ENCODE measurements at regions of chrX and their contacts with region 1.

Region 1: DNA sequence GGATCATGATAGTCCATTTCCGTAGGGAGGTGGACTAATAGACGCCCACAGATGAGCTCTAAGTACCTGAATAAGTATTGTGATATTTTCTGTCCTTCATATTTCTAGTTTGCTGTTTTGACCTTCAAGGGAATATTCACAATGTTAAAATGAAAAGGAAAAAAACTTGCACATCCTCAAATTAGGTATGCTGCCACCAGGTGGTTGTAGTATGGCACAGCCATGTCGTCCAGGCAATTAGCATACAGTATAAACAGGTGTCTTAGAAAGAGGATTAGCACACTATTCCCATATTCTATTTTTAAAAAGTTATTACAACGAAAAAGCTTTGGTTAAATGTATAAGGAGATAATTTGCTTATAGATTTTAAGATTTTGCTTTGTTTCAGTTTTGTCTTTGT is 802.0 kb downstream of the RPA4 start:
- DNase-seq: peak; percentile 45
- H3K4me3 Mint-ChIP-seq: no peak overlapping the region
- H3K27ac Mint-ChIP-seq: no peak overlapping the region
- H3K4me1 Mint-ChIP-seq: no peaks in the 10 kb centered on the region
- H3K27me3 Mint-ChIP-seq: no peaks in the 10 kb centered on the region
- CTCF ChIP-seq: no peak

Region 2: GRCh38 chrX:97026406-97026805 is 659.3 kb before region 1 on chrX:
- CTCF ChIA-PET with region 1: no interaction called
- intact Hi-C with region 1: loop called (anchors 2 kb)
- DNase-seq: no peak
- H3K4me3 Mint-ChIP-seq: no peak overlapping the region
- H3K27ac Mint-ChIP-seq: no peak overlapping the region
- H3K4me1 Mint-ChIP-seq: no peaks in the 10 kb centered on the region
- H3K27me3 Mint-ChIP-seq: no peaks in the 10 kb centered on the region
- CTCF ChIP-seq: no peak